PC-9 (cell line): ENCODE measurements at regions of chr5 and their contacts with region 1.

Region 1: DNA sequence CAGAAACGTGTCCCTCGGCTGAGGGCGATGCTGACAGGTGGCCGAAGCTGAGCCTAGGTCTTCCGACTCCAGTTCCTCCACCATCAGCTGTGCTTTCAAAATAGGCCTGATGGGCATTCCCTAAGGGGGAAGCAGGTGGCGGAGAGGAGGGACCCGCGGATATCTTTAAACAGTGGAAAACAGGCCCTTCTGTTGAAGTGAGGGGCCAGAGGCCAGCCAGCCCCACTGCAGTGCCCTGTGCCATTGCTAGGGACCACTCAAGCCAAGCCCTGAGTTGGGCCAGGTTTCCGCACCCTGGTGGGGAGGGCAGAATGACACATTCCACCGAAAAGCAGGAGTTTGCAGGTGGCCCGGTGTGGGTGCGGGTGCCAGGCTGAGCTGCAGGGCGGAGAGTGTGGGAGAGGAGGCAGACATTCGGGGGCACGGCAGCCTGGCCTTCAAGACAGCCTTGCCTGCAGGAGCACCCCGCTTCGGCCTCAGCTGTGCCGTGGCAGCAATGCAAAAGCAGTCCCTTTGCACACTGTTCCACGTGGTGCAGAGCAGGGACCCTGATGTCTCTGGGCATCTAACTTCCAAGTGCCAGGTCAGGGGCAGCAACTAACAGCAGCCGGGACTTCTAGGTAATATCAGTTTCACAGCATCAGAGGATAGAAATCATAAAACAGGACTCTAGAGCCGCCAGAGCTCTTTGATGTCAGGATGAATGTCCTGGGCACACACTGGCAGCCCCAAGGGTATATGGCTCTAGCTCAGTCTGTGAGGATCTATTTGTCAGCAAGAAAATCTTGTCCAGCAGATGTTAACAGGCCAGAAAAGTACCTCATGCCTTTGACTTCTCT is 17.2 kb downstream of the HNRNPH1 start:
- DNase-seq: no peak
- H3K4me3 ChIP-seq: no peak overlapping the region
- H3K27ac ChIP-seq: no peak overlapping the region
- H3K4me1 ChIP-seq: no peaks in the 10 kb centered on the region
- H3K27me3 ChIP-seq: no peaks in the 10 kb centered on the region
- CTCF ChIP-seq: no peak

Region 2: DNA sequence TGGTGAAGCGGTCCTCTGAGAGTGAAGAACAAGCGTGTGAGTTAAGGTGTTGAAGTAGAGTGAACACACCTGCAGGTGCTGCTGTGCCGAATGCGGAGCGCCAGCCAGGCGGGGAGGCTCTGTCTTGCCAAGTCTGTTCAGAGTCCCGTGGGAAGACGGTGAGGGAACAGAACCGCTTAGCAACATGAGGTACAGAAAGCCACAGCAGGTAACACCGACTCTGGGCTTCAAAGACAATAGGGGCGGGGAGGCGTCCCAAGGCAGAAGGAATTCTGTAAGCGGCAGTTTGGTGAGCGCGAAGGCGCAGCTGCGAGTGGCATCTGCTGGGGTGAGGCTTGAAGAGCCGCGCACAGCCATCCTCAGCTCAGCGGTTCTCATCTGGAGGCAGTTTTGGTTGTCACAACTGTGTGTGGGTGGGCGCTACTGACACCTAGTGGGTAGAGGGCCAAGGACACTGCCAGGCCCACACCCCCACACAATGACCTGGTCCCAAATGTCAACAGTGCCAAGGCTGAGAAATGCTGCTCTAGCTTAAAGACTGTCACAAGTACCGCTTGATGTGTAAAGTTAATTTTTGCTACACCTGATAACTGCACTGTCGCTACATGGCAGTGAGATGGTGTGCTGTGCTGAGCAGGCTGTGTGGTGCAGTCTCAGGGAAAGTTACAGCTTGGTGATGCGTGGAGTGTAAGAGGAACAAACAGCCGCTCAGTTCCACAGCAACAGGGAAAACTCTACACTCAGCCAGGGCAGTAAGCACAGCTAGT is 368.8 kb after region 1 on chr5:
- CTCF ChIA-PET with region 1: no interaction called
- POLR2A ChIA-PET with region 1: interaction called, 11 read pairs
- intact Hi-C with region 1: no loop called
- DNase-seq: peak in 1 of 2 experiments; percentile 32
- H3K4me3 ChIP-seq: no peak overlapping the region
- H3K27ac ChIP-seq: no peak overlapping the region
- H3K4me1 ChIP-seq: no peaks in the 10 kb centered on the region
- H3K27me3 ChIP-seq: no peaks in the 10 kb centered on the region
- CTCF ChIP-seq: peak; percentile 59

Region 3: GRCh38 chr5:180034564-180034963 is 428.3 kb after region 1 on chr5:
- CTCF ChIA-PET with region 1: no interaction called
- POLR2A ChIA-PET with region 1: no interaction called
- intact Hi-C with region 1: no loop called
- DNase-seq: no peak
- H3K4me3 ChIP-seq: no peak overlapping the region
- H3K27ac ChIP-seq: no peak overlapping the region
- H3K4me1 ChIP-seq: no peaks in the 10 kb centered on the region
- H3K27me3 ChIP-seq: no peaks in the 10 kb centered on the region
- CTCF ChIP-seq: no peak